ENCODE measurements at regions of chr11 and their contacts with region 1.

Region 1: GRCh38 chr11:64448599-64449556 is 89.9 kb downstream of the RPS6KA4 start:
- DNase-seq: peak; percentile 50 to 94
- H3K4me3 ChIP-seq: peak overlapping the region; percentile 18 to 60 (median 37); a peak in 7 of 8 replicates
- H3K27ac ChIP-seq: no peak overlapping the region
- H3K4me1 ChIP-seq: peaks cover 5 to 10% (median 7%) of the 10 kb centered on the region in 4 experiments; a peak in 6 of 7 replicates
- H3K27me3 ChIP-seq: peaks cover 0 to 13% (median 9%) of the 10 kb centered on the region in 4 experiments; a peak in 5 of 7 replicates
- CTCF ChIP-seq: peak; percentile 79 to 91 (median 83)
- EP300 ChIP-seq: no peak
- POLR2A ChIP-seq: no peak
- RAD21 ChIP-seq: peak; percentile 70 to 77

Region 2: DNA sequence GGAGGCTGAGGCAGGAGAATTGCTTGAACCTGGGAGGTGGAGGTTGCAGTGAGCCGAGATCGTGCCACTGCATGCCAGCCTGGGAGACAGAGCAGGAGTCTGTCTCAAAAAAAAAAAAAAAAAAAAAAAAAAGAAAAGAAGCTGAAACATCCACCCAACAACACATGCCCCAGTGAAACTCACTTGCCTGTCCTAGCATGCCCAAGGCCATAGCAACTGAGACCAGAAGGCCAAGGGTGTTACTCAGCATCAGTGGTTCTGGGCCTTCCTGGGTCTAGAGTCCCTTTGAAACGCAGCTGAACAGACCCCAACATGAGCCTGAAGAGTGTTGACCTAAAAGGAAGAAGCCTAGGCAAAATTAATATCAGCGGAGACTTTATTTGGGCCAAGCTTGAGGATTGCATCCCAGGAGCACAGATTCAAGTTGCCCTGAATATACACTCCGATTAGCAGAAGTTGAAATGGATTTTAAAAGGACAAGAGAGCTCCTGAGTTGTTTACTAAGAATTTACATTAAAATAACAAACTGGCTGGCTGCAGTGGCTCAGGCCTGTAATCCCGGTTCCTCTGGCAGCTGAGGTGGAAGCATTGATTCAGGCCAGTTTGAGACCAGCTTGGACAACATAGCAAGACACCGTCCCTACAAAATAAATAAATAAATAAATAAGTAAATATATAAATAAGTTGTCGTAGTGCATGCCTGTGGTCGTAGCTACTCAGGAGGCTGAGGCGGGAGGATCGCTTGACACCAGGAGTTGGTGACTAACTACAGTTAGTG is 124.0 kb before region 1 on chr11:
- CTCF ChIA-PET with region 1: no interaction called
- POLR2A ChIA-PET with region 1: no interaction called
- DNase-seq: no peak
- H3K4me3 ChIP-seq: no peak overlapping the region; a peak in 2 of 8 replicates
- H3K27ac ChIP-seq: peak overlapping the region; percentile 45; the same call in 1 of the 2 replicates
- H3K4me1 ChIP-seq: peaks cover 0 to 10% (median 4%) of the 10 kb centered on the region in 4 experiments; a peak in 4 of 7 replicates
- H3K27me3 ChIP-seq: no peaks in the 10 kb centered on the region
- CTCF ChIP-seq: no peak
- EP300 ChIP-seq: no peak
- POLR2A ChIP-seq: no peak
- RAD21 ChIP-seq: no peak

Region 3: DNA sequence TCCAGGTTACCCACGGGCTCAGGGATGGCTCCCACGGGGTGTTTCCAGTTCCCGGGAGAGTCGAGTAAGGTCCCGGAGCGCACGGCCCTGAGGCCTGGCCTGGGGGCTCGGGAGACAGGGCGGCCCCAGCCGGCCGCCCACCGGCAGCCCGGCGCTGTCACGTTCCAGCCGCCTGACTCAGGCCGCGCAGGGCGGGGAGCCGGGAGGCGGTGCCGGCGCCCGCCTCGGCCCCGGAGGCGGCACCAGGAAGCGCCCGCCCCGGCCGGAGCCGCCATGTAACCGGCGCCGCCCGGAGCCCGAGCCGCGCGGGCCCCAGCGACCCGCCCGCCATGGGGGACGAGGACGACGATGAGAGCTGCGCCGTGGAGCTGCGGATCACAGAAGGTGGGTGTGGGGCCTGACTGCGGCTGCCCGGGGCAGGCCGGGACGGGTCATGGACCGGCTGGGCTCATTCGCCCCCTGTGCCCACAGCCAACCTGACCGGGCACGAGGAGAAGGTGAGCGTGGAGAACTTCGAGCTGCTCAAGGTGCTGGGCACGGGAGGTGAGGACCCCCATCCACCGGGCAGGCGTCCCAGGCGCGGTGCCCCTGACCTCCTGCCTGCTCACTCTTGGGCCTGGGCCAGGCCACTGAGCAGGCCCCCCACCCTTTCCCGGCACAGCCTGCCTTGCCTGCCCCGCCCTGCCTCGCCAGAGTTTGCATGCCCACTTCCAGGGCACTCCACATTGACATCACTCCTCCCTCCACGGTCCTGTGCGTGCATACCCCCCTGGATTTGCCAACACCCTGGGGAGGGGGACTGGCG is 89.8 kb before region 1 on chr11 and contains the start of gene RPS6KA4:
- CTCF ChIA-PET with region 1: interaction called, 19 read pairs
- POLR2A ChIA-PET with region 1: interaction called, 3 read pairs
- DNase-seq: peak in 1 of 2 experiments; percentile 75
- H3K4me3 ChIP-seq: peak within 1 kb of the TSS; percentile 61 to 83 (median 72)
- H3K27ac ChIP-seq: no peak within 1 kb of the TSS; the same call in 1 of the 2 replicates
- H3K4me1 ChIP-seq: peaks cover 0 to 39% (median 30%) of the 10 kb centered on the region in 4 experiments; a peak in 6 of 7 replicates
- H3K27me3 ChIP-seq: no peaks in the 10 kb centered on the region
- CTCF ChIP-seq: no peak
- EP300 ChIP-seq: no peak
- POLR2A ChIP-seq: no peak
- RAD21 ChIP-seq: no peak
- total RNA-seq, gene RPS6KA4: 12.6 and 13.2 TPM in 2 replicates

Region 4: GRCh38 chr11:64396079-64396591 is 52.7 kb before region 1 on chr11:
- CTCF ChIA-PET with region 1: interaction called, 13 read pairs
- POLR2A ChIA-PET with region 1: interaction called, 5 read pairs
- DNase-seq: peak in 1 of 2 experiments; percentile 62
- H3K4me3 ChIP-seq: peak overlapping the region in 1 of 4 experiments; percentile 14; a peak in 1 of 8 replicates
- H3K27ac ChIP-seq: no peak overlapping the region
- H3K4me1 ChIP-seq: peaks cover 0 to 17% (median 10%) of the 10 kb centered on the region in 4 experiments; a peak in 6 of 7 replicates
- H3K27me3 ChIP-seq: peaks cover 0 to 2% (median 0%) of the 10 kb centered on the region in 4 experiments; a peak in 3 of 7 replicates
- CTCF ChIP-seq: no peak
- EP300 ChIP-seq: no peak
- POLR2A ChIP-seq: no peak
- RAD21 ChIP-seq: 0 out of 4 replicates have a peak, but pooled peaks have one; percentile 9 to 12

Region 5: GRCh38 chr11:64430629-64431028 is 18.2 kb before region 1 on chr11:
- CTCF ChIA-PET with region 1: interaction called, 51 read pairs
- POLR2A ChIA-PET with region 1: no interaction called
- DNase-seq: no peak
- H3K4me3 ChIP-seq: no peak overlapping the region
- H3K27ac ChIP-seq: no peak overlapping the region
- H3K4me1 ChIP-seq: no peaks in the 10 kb centered on the region; a peak in 2 of 7 replicates
- H3K27me3 ChIP-seq: peaks cover 0 to 6% (median 1%) of the 10 kb centered on the region in 4 experiments; a peak in 3 of 7 replicates
- CTCF ChIP-seq: no peak
- EP300 ChIP-seq: no peak
- POLR2A ChIP-seq: no peak
- RAD21 ChIP-seq: no peak

Region 6: DNA sequence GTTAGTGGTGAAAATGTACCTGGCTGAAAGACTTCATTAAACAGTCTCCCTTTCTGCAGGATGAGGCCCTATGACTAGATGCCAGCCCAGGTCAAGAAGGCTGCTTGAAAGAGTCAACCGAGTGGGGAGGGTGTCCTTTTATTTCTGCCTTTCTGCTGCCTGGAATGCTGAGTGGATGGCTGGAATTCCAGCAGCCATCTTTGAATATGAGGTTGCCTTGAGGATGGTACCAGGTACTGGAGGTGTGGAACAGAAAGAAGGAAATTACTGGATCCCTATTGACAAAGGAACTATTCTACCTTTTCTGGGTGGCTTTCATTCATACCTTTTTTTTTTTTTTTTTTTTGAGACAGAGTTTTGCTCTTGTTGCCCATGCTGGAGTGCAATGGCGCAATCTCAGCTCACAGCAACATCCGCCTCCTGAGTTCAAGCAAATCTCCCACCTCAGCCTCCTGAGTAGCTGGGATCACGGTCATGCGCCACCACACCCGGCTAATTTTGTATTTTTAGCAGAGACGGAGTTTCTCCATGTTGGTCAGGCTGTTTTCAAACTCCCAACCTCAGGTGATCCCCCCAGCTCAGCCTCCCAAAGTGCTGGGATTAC is 17.3 kb after region 1 on chr11:
- CTCF ChIA-PET with region 1: interaction called, 14 read pairs
- POLR2A ChIA-PET with region 1: no interaction called
- DNase-seq: no peak
- H3K4me3 ChIP-seq: no peak overlapping the region
- H3K27ac ChIP-seq: no peak overlapping the region
- H3K4me1 ChIP-seq: no peaks in the 10 kb centered on the region
- H3K27me3 ChIP-seq: peaks cover 0 to 2% (median under 1%) of the 10 kb centered on the region in 4 experiments; a peak in 3 of 7 replicates
- CTCF ChIP-seq: no peak
- EP300 ChIP-seq: no peak
- POLR2A ChIP-seq: no peak
- RAD21 ChIP-seq: no peak

Region 7: GRCh38 chr11:64566042-64566914 is 117.4 kb after region 1 on chr11:
- CTCF ChIA-PET with region 1: interaction called, 14 read pairs
- POLR2A ChIA-PET with region 1: interaction called, 3 read pairs
- DNase-seq: peak in 1 of 2 experiments; percentile 74
- H3K4me3 ChIP-seq: peak overlapping the region in 3 of 4 experiments; percentile 21 to 53 (median 27); a peak in 4 of 8 replicates
- H3K27ac ChIP-seq: peak overlapping the region; percentile 47; the same call in 1 of the 2 replicates
- H3K4me1 ChIP-seq: peaks cover 0 to 29% (median 19%) of the 10 kb centered on the region in 4 experiments; a peak in 6 of 7 replicates
- H3K27me3 ChIP-seq: peaks cover 0 to 3% (median 0%) of the 10 kb centered on the region in 4 experiments; a peak in 1 of 7 replicates
- CTCF ChIP-seq: no peak
- EP300 ChIP-seq: no peak
- POLR2A ChIP-seq: peak in 1 of 2 experiments; percentile 31; a peak in 2 of 3 replicates
- RAD21 ChIP-seq: no peak

Region 8: DNA sequence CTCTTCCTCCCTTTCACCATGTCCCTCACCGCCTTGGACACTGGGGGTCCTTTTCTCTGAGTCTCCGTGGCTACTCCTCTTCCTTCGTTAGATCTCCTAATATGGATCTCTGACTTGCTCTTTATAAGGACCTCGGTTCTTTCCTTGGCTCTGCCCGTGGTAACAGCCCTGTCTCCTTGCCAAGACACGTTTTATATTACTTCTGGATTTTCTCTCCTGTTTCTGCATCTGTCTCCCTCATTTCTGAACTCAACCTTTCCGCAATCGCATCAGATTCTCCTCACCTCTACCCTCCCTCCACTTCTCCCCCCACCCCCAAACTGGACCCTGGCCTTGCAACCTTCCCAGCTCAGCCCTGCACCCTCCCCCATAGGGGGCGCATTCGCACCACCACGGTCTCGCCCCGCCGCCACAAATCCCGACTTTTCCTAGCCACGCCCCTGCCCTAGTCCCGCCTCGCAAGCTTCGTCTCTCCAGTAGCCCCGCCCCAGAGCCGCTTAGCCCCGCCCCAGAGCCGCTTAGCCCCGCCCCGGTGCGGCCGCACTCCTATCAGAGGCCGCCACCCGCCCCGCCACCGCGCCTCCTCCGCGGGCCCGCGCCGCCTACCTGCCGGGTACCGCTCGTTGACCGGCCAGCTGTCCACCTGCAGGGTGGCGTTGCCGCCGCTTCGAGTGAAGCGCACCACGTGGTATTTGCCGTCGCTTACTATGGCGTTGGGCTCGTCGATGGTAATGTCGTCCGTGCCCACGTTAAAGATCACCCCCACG is 181.1 kb after region 1 on chr11:
- CTCF ChIA-PET with region 1: interaction called, 13 read pairs
- POLR2A ChIA-PET with region 1: no interaction called
- DNase-seq: peak; percentile 70 to 100
- H3K4me3 ChIP-seq: peak overlapping the region in 1 of 4 experiments; percentile 5; a peak in 1 of 8 replicates
- H3K27ac ChIP-seq: no peak overlapping the region
- H3K4me1 ChIP-seq: peaks cover 0 to 10% (median 5%) of the 10 kb centered on the region in 4 experiments; a peak in 6 of 7 replicates
- H3K27me3 ChIP-seq: peaks cover 0 to 19% (median 12%) of the 10 kb centered on the region in 4 experiments; a peak in 5 of 7 replicates
- CTCF ChIP-seq: peak; percentile 63 to 87 (median 65)
- EP300 ChIP-seq: no peak
- POLR2A ChIP-seq: no peak
- RAD21 ChIP-seq: peak; percentile 59

Measured in H1 (cell line).